Activated CD4-positive, alpha-beta memory T cell treated with anti-CD3 and anti-CD28 coated beads, Interleukin-2, amount 10 ng/mL, durations not matched to agents 7 days and 5 days (primary cell): ENCODE measurements at regions of chr4 and their contacts with region 1.

Region 1: DNA sequence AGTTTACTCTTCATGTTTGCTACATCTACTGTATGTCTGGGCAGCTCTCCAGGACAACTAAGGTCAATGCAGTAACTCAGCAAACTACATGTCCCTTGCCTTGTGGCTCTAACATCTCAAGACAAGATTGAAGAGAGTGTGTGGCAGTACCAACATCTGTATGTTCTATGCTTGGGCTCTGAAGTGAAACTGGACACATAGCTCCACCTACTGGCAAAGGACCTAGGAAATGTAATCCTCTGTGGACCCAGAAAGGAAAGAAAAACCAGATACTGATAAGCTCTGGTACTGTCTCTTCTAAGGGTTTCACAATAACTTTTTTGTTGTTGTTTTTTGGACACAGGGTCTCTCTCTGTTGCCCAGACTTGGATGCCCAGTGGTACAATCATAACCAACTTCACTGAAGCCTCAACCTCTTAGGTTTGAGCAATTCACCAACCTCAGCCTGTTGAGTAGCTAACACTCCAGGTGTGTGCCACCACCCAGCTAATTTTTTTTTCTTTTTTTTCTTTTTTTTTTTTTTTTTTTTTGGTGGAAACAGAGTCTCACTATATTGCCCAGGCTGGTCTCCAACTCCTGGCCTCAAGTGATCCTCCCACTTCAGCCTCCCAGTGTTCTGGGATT is 64.1 kb downstream of the QDPR start:
- DNase-seq: peak; percentile 60
- H3K4me3 Mint-ChIP-seq: no peak overlapping the region
- H3K27ac Mint-ChIP-seq: no peak overlapping the region
- H3K4me1 Mint-ChIP-seq: no peaks in the 10 kb centered on the region
- H3K27me3 Mint-ChIP-seq: peaks cover 7% of the 10 kb centered on the region

Region 2: GRCh38 chr4:16916719-16917337 is 531.0 kb before region 1 on chr4:
- CTCF ChIA-PET with region 1: interaction called, 17 read pairs
- POLR2A ChIA-PET with region 1: no interaction called
- DNase-seq: peak; percentile 73
- H3K4me3 Mint-ChIP-seq: no peak overlapping the region
- H3K27ac Mint-ChIP-seq: no peak overlapping the region
- H3K4me1 Mint-ChIP-seq: no peaks in the 10 kb centered on the region
- H3K27me3 Mint-ChIP-seq: no peaks in the 10 kb centered on the region

Region 3: GRCh38 chr4:17347445-17347844 is 100.3 kb before region 1 on chr4:
- CTCF ChIA-PET with region 1: interaction called, 41 read pairs
- POLR2A ChIA-PET with region 1: interaction called, 3 read pairs
- DNase-seq: peak; percentile 28
- H3K4me3 Mint-ChIP-seq: no peak overlapping the region
- H3K27ac Mint-ChIP-seq: no peak overlapping the region
- H3K4me1 Mint-ChIP-seq: no peaks in the 10 kb centered on the region
- H3K27me3 Mint-ChIP-seq: peaks cover 2% of the 10 kb centered on the region

Region 4: GRCh38 chr4:17468371-17469221 is 20.8 kb after region 1 on chr4:
- CTCF ChIA-PET with region 1: interaction called, 18 read pairs
- POLR2A ChIA-PET with region 1: no interaction called
- DNase-seq: no peak
- H3K4me3 Mint-ChIP-seq: no peak overlapping the region
- H3K27ac Mint-ChIP-seq: no peak overlapping the region
- H3K4me1 Mint-ChIP-seq: peaks cover 1% of the 10 kb centered on the region
- H3K27me3 Mint-ChIP-seq: no peaks in the 10 kb centered on the region